ENCODE measurements at regions of chr4 and their contacts with region 1.

Region 1: GRCh38 chr4:3318561-3319021 is 25.8 kb downstream of the RGS12 start:
- DNase-seq: peak; percentile 93
- ATAC-seq: peak; percentile 99
- H3K4me3 Mint-ChIP-seq: peak overlapping the region; percentile 18; the same call in 1 of the 2 replicates
- H3K27ac Mint-ChIP-seq: peak overlapping the region; percentile 95
- H3K4me1 Mint-ChIP-seq: peaks cover 11% of the 10 kb centered on the region
- H3K27me3 Mint-ChIP-seq: no peaks in the 10 kb centered on the region
- CTCF ChIP-seq: peak; percentile 35

Region 2: GRCh38 chr4:3233391-3234071 is 85.1 kb before region 1 on chr4:
- CTCF ChIA-PET with region 1: interaction called, 11 read pairs
- POLR2A ChIA-PET with region 1: no interaction called
- DNase-seq: no peak
- ATAC-seq: no peak
- H3K4me3 Mint-ChIP-seq: no peak overlapping the region
- H3K27ac Mint-ChIP-seq: peak overlapping the region; percentile 30; the same call in 1 of the 2 replicates
- H3K4me1 Mint-ChIP-seq: peaks cover 15% of the 10 kb centered on the region
- H3K27me3 Mint-ChIP-seq: peaks cover 20% of the 10 kb centered on the region
- CTCF ChIP-seq: no peak

Region 3: GRCh38 chr4:3262208-3263052 is 56.2 kb before region 1 on chr4:
- CTCF ChIA-PET with region 1: interaction called, 12 read pairs
- POLR2A ChIA-PET with region 1: no interaction called
- DNase-seq: peak; percentile 8
- ATAC-seq: no peak
- H3K4me3 Mint-ChIP-seq: no peak overlapping the region
- H3K27ac Mint-ChIP-seq: no peak overlapping the region
- H3K4me1 Mint-ChIP-seq: no peaks in the 10 kb centered on the region
- H3K27me3 Mint-ChIP-seq: no peaks in the 10 kb centered on the region
- CTCF ChIP-seq: no peak

Region 4: GRCh38 chr4:3299976-3300671 is 18.5 kb before region 1 on chr4:
- CTCF ChIA-PET with region 1: interaction called, 85 read pairs
- POLR2A ChIA-PET with region 1: no interaction called
- DNase-seq: no peak
- ATAC-seq: peak; percentile 22
- H3K4me3 Mint-ChIP-seq: no peak overlapping the region
- H3K27ac Mint-ChIP-seq: 0 out of 2 replicates have a peak overlapping the region, but pooled peaks have one; percentile 37
- H3K4me1 Mint-ChIP-seq: peaks cover 37% of the 10 kb centered on the region
- H3K27me3 Mint-ChIP-seq: no peaks in the 10 kb centered on the region
- CTCF ChIP-seq: no peak

Region 5: GRCh38 chr4:3340700-3341083 is 22.1 kb after region 1 on chr4:
- CTCF ChIA-PET with region 1: interaction called, 23 read pairs
- POLR2A ChIA-PET with region 1: no interaction called
- DNase-seq: no peak
- ATAC-seq: 0 out of 2 replicates have a peak, but pooled peaks have one; percentile 16
- H3K4me3 Mint-ChIP-seq: no peak overlapping the region
- H3K27ac Mint-ChIP-seq: no peak overlapping the region
- H3K4me1 Mint-ChIP-seq: peaks cover 15% of the 10 kb centered on the region
- H3K27me3 Mint-ChIP-seq: no peaks in the 10 kb centered on the region
- CTCF ChIP-seq: no peak

Region 6: GRCh38 chr4:3369781-3370674 is 51.4 kb after region 1 on chr4:
- CTCF ChIA-PET with region 1: interaction called, 28 read pairs
- POLR2A ChIA-PET with region 1: no interaction called
- DNase-seq: no peak
- ATAC-seq: peak; percentile 60
- H3K4me3 Mint-ChIP-seq: peak overlapping the region; percentile 54
- H3K27ac Mint-ChIP-seq: peak overlapping the region; percentile 39
- H3K4me1 Mint-ChIP-seq: peaks cover 44% of the 10 kb centered on the region
- H3K27me3 Mint-ChIP-seq: peaks cover 25% of the 10 kb centered on the region
- CTCF ChIP-seq: no peak

Region 7: GRCh38 chr4:3436798-3437581 is 118.4 kb after region 1 on chr4:
- CTCF ChIA-PET with region 1: interaction called, 42 read pairs
- POLR2A ChIA-PET with region 1: no interaction called
- DNase-seq: no peak
- ATAC-seq: no peak
- H3K4me3 Mint-ChIP-seq: no peak overlapping the region
- H3K27ac Mint-ChIP-seq: no peak overlapping the region
- H3K4me1 Mint-ChIP-seq: no peaks in the 10 kb centered on the region
- H3K27me3 Mint-ChIP-seq: no peaks in the 10 kb centered on the region
- CTCF ChIP-seq: no peak

Measured in WTC11 (cell line).